ENCODE measurements at regions of chr1 and their contacts with region 1.

Region 1: GRCh38 chr1:11913291-11913690 is 12.9 kb downstream of the KIAA2013 start:
- DNase-seq: no peak
- ATAC-seq: no peak
- H3K4me3 ChIP-seq: no peak overlapping the region
- H3K27ac ChIP-seq: no peak overlapping the region
- H3K4me1 ChIP-seq: peaks cover 3% of the 10 kb centered on the region; the same call in 1 of the 2 replicates
- H3K27me3 ChIP-seq: no peaks in the 10 kb centered on the region
- CTCF ChIP-seq: no peak

Region 2: DNA sequence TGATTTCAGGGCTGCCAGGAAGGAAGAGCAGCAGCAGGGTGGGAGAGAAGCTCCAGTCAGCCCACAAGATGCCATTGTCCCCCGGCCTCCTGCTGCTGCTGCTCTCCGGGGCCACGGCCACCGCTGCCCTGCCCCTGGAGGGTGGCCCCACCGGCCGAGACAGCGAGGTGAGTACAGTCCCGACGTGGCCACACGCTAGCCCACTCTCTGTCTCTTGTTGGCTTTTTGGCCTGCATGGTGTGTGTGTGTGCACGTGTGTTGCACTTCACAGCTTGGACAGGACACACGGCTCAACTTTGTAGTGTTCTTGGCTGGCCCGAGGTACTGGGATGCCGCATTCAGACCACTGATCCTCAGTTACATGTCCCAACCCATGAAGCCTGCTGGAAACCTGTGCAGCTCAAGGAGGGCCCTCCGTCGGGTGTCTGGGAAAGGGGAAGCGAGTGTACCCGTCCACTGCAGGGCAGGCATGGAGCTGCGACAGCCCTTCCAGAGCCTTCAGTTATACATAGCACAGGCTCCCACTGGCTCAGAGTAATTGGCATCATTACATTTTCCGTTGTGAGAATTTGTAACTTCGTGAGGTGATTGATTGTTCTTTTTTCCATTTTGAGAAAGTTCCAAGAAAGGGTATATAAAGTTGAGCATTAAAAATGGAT is 1463.0 kb before region 1 on chr1:
- CTCF ChIA-PET with region 1: no interaction called
- POLR2A ChIA-PET with region 1: interaction called, 11 read pairs
- in situ Hi-C with region 1: no loop called
- intact Hi-C with region 1: no loop called
- DNase-seq: no peak
- ATAC-seq: no peak
- H3K4me3 ChIP-seq: no peak overlapping the region
- H3K27ac ChIP-seq: no peak overlapping the region
- H3K4me1 ChIP-seq: no peaks in the 10 kb centered on the region
- H3K27me3 ChIP-seq: no peaks in the 10 kb centered on the region
- CTCF ChIP-seq: no peak

Region 3: DNA sequence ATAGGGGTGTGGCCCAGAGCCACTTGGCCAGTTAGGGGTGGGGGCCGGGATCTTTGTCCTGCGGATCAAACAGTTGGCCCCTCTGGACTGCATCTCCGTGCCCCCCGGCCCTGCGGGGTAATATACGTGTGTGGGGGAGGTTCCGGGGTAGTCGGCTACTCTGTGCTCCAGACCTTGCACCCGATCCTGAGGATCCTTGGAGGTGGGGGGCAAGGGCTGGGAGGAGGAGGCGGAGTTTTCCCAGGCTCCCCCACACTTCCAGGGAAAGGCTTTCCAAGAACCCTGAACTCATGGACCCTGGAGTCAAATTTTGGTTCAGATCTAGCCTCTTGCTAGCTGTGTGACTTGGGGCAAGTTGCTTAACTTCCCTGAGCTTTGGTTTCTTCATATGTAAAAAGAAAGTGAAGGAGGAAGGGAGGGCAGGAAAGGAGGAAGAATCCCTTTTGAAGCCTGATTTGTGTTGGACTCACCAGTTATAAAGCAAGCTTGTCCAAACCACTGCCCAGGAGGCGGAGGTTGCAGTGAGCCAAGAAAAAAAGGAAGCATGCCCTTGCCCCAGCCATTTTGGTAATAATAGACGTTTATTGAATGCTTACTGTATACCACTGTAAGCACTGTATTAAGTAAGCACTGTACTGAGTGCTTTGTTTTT is 106.7 kb after region 1 on chr1:
- CTCF ChIA-PET with region 1: no interaction called
- POLR2A ChIA-PET with region 1: interaction called, 10 read pairs
- in situ Hi-C with region 1: no loop called
- intact Hi-C with region 1: no loop called
- DNase-seq: no peak
- ATAC-seq: peak; percentile 17
- H3K4me3 ChIP-seq: peak overlapping the region; percentile 77 to 80
- H3K27ac ChIP-seq: peak overlapping the region; percentile 79
- H3K4me1 ChIP-seq: no peaks in the 10 kb centered on the region
- H3K27me3 ChIP-seq: no peaks in the 10 kb centered on the region
- CTCF ChIP-seq: no peak

Region 4: GRCh38 chr1:12063141-12064072 is 150.1 kb after region 1 on chr1 and contains the start of gene TNFRSF8:
- CTCF ChIA-PET with region 1: no interaction called
- POLR2A ChIA-PET with region 1: no interaction called
- in situ Hi-C with region 1: no loop called
- intact Hi-C with region 1: no loop called
- DNase-seq: no peak
- ATAC-seq: no peak
- H3K4me3 ChIP-seq: no peak within 1 kb of the TSS
- H3K27ac ChIP-seq: no peak within 1 kb of the TSS
- H3K4me1 ChIP-seq: no peaks in the 10 kb centered on the region
- H3K27me3 ChIP-seq: peaks cover 2% of the 10 kb centered on the region
- CTCF ChIP-seq: no peak
- total RNA-seq, gene TNFRSF8: 0.13 TPM